ENCODE measurements at regions of chr20 and their contacts with region 1.

Region 1: DNA sequence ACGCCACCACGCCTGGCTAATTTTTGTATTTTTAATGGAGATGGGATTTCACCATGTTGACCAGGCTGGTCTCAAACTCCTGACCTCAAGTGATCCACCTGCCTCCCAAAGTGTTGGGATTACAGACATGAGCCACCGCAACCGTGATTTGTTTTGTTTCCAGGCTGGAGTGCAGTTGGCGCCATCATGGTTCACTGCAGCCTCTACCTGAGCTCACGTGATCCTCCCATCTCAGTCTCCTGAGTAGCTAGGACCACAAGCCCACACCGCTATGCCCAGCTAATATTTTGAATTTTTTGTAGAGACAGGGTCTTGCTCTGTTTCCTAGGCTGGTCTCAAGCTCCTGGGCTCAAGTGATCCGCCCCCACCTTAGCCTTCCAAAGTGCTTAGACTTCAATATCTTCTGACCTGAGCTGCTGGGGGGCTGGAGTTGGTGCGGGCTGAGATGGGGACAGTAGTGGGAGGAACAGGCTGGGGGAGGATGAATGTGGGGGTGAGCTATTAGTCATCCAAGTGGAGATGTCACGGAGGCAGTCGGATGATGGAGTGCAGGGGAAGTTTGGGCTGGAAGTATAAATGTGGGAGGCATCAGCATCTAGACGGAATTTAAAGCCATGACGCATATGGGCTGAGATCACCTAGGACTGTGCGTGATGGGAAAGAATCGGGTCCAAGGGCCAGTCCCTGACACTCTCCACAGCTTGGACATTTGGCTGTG is 23.1 kb upstream of the ZMYND8 start:
- DNase-seq: no peak
- ATAC-seq: no peak
- H3K4me3 ChIP-seq: no peak overlapping the region
- H3K27ac ChIP-seq: no peak overlapping the region
- H3K4me1 ChIP-seq: peaks cover 5% of the 10 kb centered on the region
- H3K27me3 ChIP-seq: no peaks in the 10 kb centered on the region
- CTCF ChIP-seq: no peak
- EP300 ChIP-seq: no peak
- POLR2A ChIP-seq: no peak
- RAD21 ChIP-seq: no peak

Region 2: DNA sequence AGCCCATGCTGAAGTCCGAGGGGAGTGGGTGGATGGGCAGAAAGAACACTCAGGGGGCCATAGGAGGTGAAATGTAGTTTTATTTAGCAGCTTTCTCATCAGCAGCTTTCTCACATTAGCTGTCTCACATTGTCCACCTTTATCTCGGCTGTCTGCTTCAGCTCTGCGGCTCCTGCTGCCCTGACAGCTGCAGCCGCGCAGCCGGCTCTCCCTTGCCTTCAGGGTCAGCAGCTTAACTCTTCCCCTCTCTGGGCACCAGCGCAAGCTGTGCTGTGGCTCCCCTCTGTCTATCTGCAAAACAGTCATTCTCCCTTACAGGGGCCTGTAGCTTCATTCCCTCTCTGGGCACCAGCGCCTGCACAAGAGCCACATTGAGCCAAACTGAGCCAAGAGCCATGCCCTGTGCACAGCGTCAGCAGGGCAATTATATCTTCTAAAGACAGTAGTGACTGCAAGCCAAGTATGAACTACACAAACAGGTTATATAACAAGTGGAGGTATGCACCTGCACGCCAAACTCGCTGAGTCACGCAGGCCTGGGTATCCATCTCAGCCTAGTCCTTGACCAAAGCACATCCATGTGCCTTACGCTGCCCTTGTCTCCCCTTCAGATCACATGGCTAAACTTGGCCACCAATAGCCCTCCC is 286.1 kb before region 1 on chr20:
- CTCF ChIA-PET with region 1: no interaction called
- POLR2A ChIA-PET with region 1: no interaction called
- RAD21 ChIA-PET with region 1: no interaction called
- SMC1A ChIA-PET with region 1: no interaction called
- in situ Hi-C with region 1: no loop called
- intact Hi-C with region 1: no loop called
- DNase-seq: no peak
- ATAC-seq: no peak
- H3K4me3 ChIP-seq: no peak overlapping the region
- H3K27ac ChIP-seq: no peak overlapping the region
- H3K4me1 ChIP-seq: no peaks in the 10 kb centered on the region
- H3K27me3 ChIP-seq: peaks cover 0 to 2% of the 10 kb centered on the region in 2 experiments; a peak in 1 of 4 replicates
- CTCF ChIP-seq: no peak
- EP300 ChIP-seq: no peak
- POLR2A ChIP-seq: no peak
- RAD21 ChIP-seq: no peak

Region 3: DNA sequence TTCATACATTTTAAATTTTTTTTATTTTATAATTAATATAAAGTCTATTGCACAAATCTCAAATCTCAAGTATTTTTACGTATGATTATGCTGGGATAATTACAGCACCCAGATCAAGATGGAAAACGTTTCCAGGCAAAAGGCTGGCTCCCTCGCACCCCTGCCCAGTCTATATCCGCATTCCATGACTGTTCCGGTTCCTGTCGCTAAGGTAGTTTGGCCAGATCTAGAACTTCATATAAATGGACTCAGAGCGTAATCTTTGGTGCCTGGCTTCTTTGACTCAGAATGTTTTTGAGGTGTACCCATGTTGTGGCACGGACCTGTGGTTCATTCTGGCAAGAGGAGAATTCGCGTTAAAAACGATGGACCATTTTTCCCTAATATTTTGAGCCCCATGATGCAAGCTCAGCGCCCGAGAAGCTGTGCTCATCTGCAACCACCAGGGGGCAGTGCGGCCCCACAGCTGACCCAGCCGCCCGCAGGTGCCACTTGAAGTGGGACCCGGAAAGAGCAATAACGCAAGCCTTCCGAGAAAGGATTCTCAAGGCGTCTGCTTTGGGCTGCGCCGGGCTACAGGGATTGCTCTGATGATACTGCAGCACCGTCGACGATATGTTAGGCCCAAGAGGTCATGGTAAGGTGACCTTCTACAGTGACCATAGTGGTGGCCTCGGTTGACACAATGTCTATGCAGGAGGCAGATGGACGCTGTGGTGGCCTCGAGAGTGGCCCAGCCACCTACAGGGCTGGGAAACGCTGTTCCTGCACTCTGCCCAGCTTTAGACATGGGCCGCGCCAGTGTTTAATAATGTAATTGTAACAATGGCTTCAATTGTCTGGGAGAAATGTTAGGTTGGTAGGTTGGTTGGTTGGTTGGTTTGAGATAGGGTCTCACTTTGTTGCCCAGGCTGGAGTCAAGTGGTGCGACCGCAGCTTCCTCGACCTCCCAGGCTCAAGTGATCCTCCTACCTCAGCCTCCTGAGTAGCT is 183.2 kb before region 1 on chr20:
- CTCF ChIA-PET with region 1: interaction called, 326 read pairs
- POLR2A ChIA-PET with region 1: interaction called, 4 read pairs
- RAD21 ChIA-PET with region 1: interaction called, 141 read pairs
- SMC1A ChIA-PET with region 1: interaction called, 140 read pairs
- in situ Hi-C with region 1: loop called (anchors 5 kb)
- intact Hi-C with region 1: loop called (anchors 1 kb)
- DNase-seq: peak; percentile 19
- ATAC-seq: peak; percentile 86
- H3K4me3 ChIP-seq: no peak overlapping the region
- H3K27ac ChIP-seq: no peak overlapping the region
- H3K4me1 ChIP-seq: peaks cover 17% of the 10 kb centered on the region
- H3K27me3 ChIP-seq: peaks cover 0 to 1% of the 10 kb centered on the region in 2 experiments; a peak in 1 of 4 replicates
- CTCF ChIP-seq: peak; percentile 91 to 97 (median 95)
- EP300 ChIP-seq: no peak
- POLR2A ChIP-seq: no peak
- RAD21 ChIP-seq: peak; percentile 95

Region 4: GRCh38 chr20:47231382-47232039 is 148.1 kb before region 1 on chr20:
- CTCF ChIA-PET with region 1: interaction called, 18 read pairs
- POLR2A ChIA-PET with region 1: no interaction called
- RAD21 ChIA-PET with region 1: interaction called, 4 read pairs
- SMC1A ChIA-PET with region 1: interaction called, 4 read pairs
- in situ Hi-C with region 1: no loop called
- intact Hi-C with region 1: no loop called
- DNase-seq: no peak
- ATAC-seq: no peak
- H3K4me3 ChIP-seq: no peak overlapping the region
- H3K27ac ChIP-seq: no peak overlapping the region
- H3K4me1 ChIP-seq: peaks cover 5% of the 10 kb centered on the region; the same call in 1 of the 2 replicates
- H3K27me3 ChIP-seq: no peaks in the 10 kb centered on the region
- CTCF ChIP-seq: no peak
- EP300 ChIP-seq: no peak
- POLR2A ChIP-seq: no peak
- RAD21 ChIP-seq: no peak

Region 5: DNA sequence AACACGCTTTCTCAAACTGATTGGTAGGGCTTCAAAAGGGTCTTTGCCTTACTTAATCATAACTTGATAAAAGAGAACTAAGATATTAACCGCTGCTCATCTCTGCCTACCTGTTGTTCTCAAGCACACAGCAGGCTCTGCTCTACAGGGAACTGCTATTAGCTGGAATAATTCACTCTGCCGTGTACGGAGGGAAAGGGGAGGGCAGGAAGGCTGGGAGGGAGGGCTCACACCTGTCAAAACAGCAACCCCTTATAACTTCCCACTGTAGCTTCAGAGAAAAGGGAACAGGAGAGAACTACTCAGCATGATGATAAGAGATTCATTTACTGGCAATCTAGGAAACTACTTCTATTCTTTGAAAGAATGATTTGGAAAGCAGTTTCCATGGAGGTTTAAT is 98.2 kb before region 1 on chr20:
- CTCF ChIA-PET with region 1: interaction called, 344 read pairs
- POLR2A ChIA-PET with region 1: no interaction called
- RAD21 ChIA-PET with region 1: interaction called, 10 read pairs
- SMC1A ChIA-PET with region 1: interaction called, 266 read pairs
- in situ Hi-C with region 1: loop called (anchors 10 kb)
- intact Hi-C with region 1: no loop called
- DNase-seq: no peak
- ATAC-seq: no peak
- H3K4me3 ChIP-seq: no peak overlapping the region
- H3K27ac ChIP-seq: no peak overlapping the region
- H3K4me1 ChIP-seq: 0 out of 2 replicates have a peak, but pooled peaks cover under 1% of the 10 kb centered on the region
- H3K27me3 ChIP-seq: no peaks in the 10 kb centered on the region
- CTCF ChIP-seq: no peak
- EP300 ChIP-seq: no peak
- POLR2A ChIP-seq: no peak
- RAD21 ChIP-seq: no peak

Region 6: GRCh38 chr20:47348539-47349142 is 31.0 kb before region 1 on chr20:
- CTCF ChIA-PET with region 1: interaction called, 66 read pairs
- POLR2A ChIA-PET with region 1: interaction called, 6 read pairs
- RAD21 ChIA-PET with region 1: interaction called, 96 read pairs
- SMC1A ChIA-PET with region 1: interaction called, 51 read pairs
- in situ Hi-C with region 1: no loop called
- intact Hi-C with region 1: no loop called
- DNase-seq: no peak
- ATAC-seq: peak; percentile 2; the same call in 1 of the 3 replicates
- H3K4me3 ChIP-seq: peak overlapping the region; percentile 77
- H3K27ac ChIP-seq: peak overlapping the region; percentile 99
- H3K4me1 ChIP-seq: peaks cover 33% of the 10 kb centered on the region
- H3K27me3 ChIP-seq: no peaks in the 10 kb centered on the region
- CTCF ChIP-seq: no peak
- EP300 ChIP-seq: no peak
- POLR2A ChIP-seq: no peak
- RAD21 ChIP-seq: no peak

Region 7: GRCh38 chr20:47501483-47502270 is 122.1 kb after region 1 on chr20 and contains the start of gene NCOA3:
- CTCF ChIA-PET with region 1: interaction called, 9 read pairs
- POLR2A ChIA-PET with region 1: interaction called, 5 read pairs
- RAD21 ChIA-PET with region 1: interaction called, 22 read pairs
- SMC1A ChIA-PET with region 1: interaction called, 11 read pairs
- in situ Hi-C with region 1: no loop called
- intact Hi-C with region 1: no loop called
- DNase-seq: no peak
- ATAC-seq: peak; percentile 82
- H3K4me3 ChIP-seq: peak within 1 kb of the TSS; percentile 94
- H3K27ac ChIP-seq: peak within 1 kb of the TSS; percentile 92
- H3K4me1 ChIP-seq: peaks cover 30% of the 10 kb centered on the region
- H3K27me3 ChIP-seq: no peaks in the 10 kb centered on the region
- CTCF ChIP-seq: peak; percentile 15 to 43 (median 20); a peak in 3 of 6 replicates
- EP300 ChIP-seq: peak in 1 of 2 experiments; percentile 67; a peak in 2 of 4 replicates
- POLR2A ChIP-seq: peak; percentile 98
- RAD21 ChIP-seq: peak; percentile 24; the same call in 1 of the 2 replicates
- polyA plus RNA-seq, gene NCOA3: 16.9 to 18.0 TPM

Region 8: GRCh38 chr20:47620808-47621805 is 241.5 kb after region 1 on chr20:
- CTCF ChIA-PET with region 1: interaction called, 64 read pairs
- POLR2A ChIA-PET with region 1: no interaction called
- RAD21 ChIA-PET with region 1: interaction called, 56 read pairs
- SMC1A ChIA-PET with region 1: interaction called, 32 read pairs
- in situ Hi-C with region 1: no loop called
- intact Hi-C with region 1: loop called (anchors 1 kb)
- DNase-seq: peak; percentile 32
- ATAC-seq: peak; percentile 79
- H3K4me3 ChIP-seq: no peak overlapping the region
- H3K27ac ChIP-seq: peak overlapping the region; percentile 33
- H3K4me1 ChIP-seq: peaks cover 10% of the 10 kb centered on the region
- H3K27me3 ChIP-seq: no peaks in the 10 kb centered on the region
- CTCF ChIP-seq: peak; percentile 59 to 68 (median 60)
- EP300 ChIP-seq: no peak
- POLR2A ChIP-seq: no peak
- RAD21 ChIP-seq: peak; percentile 89